ENCODE measurements at regions of chr4 and their contacts with region 1.

Region 1: DNA sequence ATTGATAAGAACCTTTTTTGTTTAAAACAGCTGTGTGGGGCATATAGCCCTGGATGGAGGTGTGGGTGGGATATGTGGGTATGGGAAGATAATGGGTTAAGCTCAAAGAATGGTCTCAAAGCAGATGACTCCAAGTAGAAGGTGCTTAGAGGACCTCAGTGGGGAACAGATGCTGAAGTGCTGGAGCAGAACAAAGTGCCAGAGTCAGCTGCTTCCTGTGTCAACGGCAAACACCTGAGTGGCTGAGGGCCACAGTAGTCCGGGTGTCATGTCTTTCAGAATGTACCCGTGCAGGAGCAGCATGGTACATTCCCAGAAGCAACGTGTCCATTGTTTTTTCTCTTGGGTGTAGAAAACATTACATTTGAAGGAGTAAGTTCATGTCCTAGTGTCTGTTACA is 210.6 kb downstream of the CCNG2 start:
- DNase-seq: no peak
- H3K4me3 Mint-ChIP-seq: no peak overlapping the region
- H3K27ac Mint-ChIP-seq: no peak overlapping the region
- H3K4me1 Mint-ChIP-seq: no peaks in the 10 kb centered on the region
- H3K27me3 Mint-ChIP-seq: peaks cover 8% of the 10 kb centered on the region

Region 2: DNA sequence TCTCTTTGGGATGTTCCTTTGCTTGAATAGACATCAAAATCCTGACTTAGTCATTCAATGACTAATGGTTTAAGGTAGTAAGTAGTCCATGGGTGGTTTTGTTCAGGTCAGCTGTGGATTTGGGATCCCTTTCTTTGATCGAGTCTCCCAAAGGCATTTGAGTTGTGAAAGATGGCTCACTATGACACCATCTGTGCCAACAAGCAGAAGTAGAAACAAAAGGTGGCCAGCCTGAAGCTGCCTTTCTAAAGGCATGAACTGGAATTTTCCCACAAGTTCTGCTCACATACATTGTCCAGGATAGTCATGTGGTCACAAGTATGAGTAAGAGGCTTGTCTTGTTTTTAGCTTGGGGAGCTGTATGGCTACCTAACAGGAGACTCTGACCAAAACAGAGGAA is 80.7 kb before region 1 on chr4:
- intact Hi-C with region 1: no loop called
- DNase-seq: no peak
- H3K4me3 Mint-ChIP-seq: no peak overlapping the region
- H3K27ac Mint-ChIP-seq: no peak overlapping the region
- H3K4me1 Mint-ChIP-seq: no peaks in the 10 kb centered on the region
- H3K27me3 Mint-ChIP-seq: peaks cover 2% of the 10 kb centered on the region

Region 3: DNA sequence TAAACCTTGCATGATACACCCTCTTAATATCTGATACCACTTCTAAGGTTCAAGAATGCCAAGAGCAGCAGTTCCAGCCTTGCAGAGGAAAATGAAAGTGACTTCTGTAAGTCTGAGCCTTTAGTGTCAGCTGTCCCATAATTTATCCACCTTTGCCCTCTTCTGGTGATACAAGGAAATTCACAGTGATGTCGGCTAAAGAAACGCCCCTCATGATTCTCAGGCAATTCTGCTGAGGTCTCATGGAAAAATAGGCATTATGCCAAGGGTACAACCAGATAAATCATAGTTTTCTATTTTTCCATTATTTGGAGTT is 65.7 kb after region 1 on chr4:
- intact Hi-C with region 1: loop called (anchors 5 kb)
- DNase-seq: no peak
- H3K4me3 Mint-ChIP-seq: no peak overlapping the region
- H3K27ac Mint-ChIP-seq: no peak overlapping the region
- H3K4me1 Mint-ChIP-seq: peaks cover 3% of the 10 kb centered on the region
- H3K27me3 Mint-ChIP-seq: peaks cover 4% of the 10 kb centered on the region

Region 4: DNA sequence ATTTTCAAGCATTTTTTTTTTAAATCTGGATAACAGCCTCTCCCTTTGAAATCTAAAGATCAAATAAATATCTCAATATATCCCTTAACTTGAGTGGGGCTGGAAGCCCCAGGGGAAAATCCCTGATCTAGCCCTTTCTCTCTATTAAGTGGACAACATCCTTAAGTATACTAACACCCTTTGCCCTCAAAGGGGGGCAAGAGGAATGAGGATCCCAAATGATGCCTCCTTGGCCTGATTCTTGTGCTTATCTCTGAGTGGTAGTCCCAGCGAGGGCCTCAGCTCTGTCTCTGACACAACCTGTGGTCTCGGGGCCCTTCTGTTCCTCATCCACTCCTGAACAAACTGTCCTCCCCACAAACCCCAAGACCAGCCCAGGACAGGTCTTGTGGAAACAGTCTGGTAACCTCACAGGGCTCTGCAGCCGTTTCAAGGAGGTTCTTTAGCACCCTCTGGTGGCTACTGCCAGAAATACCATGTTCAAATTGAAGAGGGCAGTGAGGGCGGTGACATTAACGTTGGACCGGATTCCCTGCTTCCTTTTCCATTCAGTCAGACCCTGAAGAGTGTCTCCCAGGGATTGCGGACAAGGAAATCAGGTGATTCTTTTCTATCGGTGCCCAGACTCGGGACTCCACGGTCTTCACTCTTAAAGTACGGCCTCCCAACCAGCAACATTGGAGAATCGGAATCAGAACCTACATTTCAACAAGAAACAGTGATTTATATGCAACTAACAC is 250.9 kb after region 1 on chr4:
- intact Hi-C with region 1: loop called (anchors 2 kb)
- DNase-seq: peak; percentile 30
- H3K4me3 Mint-ChIP-seq: no peak overlapping the region
- H3K27ac Mint-ChIP-seq: no peak overlapping the region
- H3K4me1 Mint-ChIP-seq: peaks cover 26% of the 10 kb centered on the region
- H3K27me3 Mint-ChIP-seq: peaks cover 28% of the 10 kb centered on the region

Measured in activated T-helper 2 cell treated with anti-CD3 and anti-CD28 coated beads, Interferon-gamma antibody, Interleukin-2, Interleukin-4, amounts not matched to agents 10 μg/mL and 5 μg/mL and 100 μg/mL, durations not matched to agents 14 hours and 24 hours and 36 hours (primary cell).